ENCODE measurements at regions of chr18 and their contacts with region 1.

Region 1: GRCh38 chr18:62584241-62585120 is 61.7 kb downstream of the ZCCHC2 start:
- DNase-seq: peak; percentile 75 to 89
- ATAC-seq: peak; percentile 72 to 91 (median 87)
- H3K4me3 ChIP-seq: peak overlapping the region in 4 of 10 donors; percentile 9 to 25 (median 20)
- H3K27ac ChIP-seq: peak overlapping the region in 7 of 10 donors; percentile 19 to 53 (median 39)
- H3K4me1 ChIP-seq: peaks cover 0 to 30% (median 16%) of the 10 kb centered on the region in 9 donors
- H3K27me3 ChIP-seq: no peaks in the 10 kb centered on the region
- CTCF ChIP-seq: peak; percentile 91 to 98 (median 94)

Region 2: DNA sequence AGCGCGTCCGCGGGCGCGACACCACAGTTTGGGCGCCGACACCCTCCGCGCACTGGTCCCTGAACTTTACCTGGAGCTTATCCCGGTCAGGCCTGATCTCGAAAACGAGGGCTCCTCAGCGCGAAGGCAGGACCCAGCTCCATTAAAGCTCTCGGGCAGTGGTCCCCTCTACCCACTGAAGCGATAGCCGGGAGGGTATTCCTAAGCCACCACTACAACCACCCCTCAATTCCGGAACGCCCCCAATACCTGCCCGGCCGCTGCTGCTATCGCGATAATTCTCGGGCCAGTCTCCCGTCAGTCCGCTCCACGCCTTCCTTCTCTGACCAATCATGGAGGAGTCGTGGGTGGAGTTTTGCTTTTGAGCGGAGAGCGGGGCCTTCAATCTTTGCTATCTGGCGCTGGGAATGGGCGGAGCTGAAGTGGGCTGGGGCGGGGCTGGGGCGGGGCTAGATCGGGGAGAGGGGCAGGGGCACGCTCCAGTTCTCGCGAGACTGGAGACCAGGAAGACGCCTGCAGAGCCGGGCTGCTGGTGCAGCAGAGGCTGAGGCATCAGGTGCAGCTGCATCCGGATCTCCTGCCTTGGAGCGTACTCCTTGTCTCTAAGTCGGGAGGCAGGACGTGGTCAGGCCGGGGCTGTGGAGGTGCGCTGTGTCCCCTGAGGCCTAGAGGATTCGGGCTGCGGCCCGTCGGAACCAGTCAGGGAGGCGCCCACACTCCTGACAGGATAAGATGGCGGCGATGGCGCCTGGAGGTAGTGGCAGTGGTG is 397.5 kb before region 1 on chr18 and contains the starts of genes PIGN and RELCH:
- intact Hi-C with region 1: loop called in 5 of 10 experiments (anchors 5 to 10 kb)
- DNase-seq: peak; percentile 90 to 98
- ATAC-seq: peak; percentile 98 to 99 (median 99)
- H3K4me3 ChIP-seq: peak within 1 kb of the TSS; percentile 72 to 100 (median 94)
- H3K27ac ChIP-seq: peak within 1 kb of the TSS; percentile 56 to 91 (median 83)
- H3K4me1 ChIP-seq: peaks cover 0 to 53% (median 31%) of the 10 kb centered on the region in 9 donors
- H3K27me3 ChIP-seq: no peaks in the 10 kb centered on the region
- CTCF ChIP-seq: no peak
- total RNA-seq, gene PIGN: 14.4 to 31.6 (median 21.2) TPM
- total RNA-seq, gene RELCH: 12.1 to 21.0 (median 16.5) TPM

Region 3: DNA sequence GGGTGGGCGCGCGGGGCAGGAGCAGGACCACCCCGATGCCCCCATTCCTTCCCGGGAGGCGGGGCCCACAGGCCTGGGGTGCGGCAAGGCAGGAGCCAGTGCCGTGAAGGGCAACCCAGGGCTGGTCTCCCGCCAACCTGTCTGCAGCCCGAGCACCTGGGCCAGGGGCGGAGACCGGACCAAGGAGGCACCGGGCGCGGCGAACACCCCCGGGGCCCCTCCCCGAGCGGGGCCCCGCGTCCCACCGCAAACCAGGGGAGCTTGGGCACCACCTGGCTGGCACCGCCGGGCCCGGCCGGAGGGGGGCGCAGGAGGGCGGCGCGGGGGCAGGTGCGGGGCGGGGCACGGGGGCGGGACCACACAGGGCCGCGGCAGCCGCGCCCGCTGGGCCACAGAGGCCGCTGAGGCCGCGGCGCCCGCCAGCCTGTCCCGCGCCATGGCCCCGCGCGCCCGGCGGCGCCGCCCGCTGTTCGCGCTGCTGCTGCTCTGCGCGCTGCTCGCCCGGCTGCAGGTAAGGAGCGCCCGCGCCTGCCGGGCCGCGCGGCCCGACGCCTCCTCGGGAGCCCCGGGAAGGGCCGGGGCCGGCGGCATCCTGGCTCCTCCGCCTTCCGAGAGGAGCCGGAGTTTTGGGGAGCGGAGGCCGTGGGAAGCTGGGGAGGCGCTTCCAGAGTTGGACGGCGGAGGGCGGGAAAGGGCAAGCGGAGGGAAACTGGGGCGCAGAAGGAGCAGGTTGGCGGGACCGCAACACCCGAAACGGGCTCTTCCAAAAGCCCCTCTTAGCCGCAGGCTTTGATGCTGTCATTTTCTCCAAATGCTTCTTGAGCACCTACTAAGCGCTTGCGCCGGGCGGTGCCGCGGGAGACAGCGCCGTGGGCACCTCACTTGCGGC is 259.3 kb before region 1 on chr18 and contains the start of gene TNFRSF11A:
- intact Hi-C with region 1: loop called in 3 of 10 experiments (anchors 10 kb)
- DNase-seq: peak in 1 of 2 donors; percentile 42
- ATAC-seq: peak in 7 of 8 donors; percentile 13 to 64 (median 42)
- H3K4me3 ChIP-seq: peak within 1 kb of the TSS; percentile 7 to 60 (median 51)
- H3K27ac ChIP-seq: no peak within 1 kb of the TSS
- H3K4me1 ChIP-seq: peaks cover 6 to 54% (median 35%) of the 10 kb centered on the region in 9 donors
- H3K27me3 ChIP-seq: peaks cover 12 to 74% (median 57%) of the 10 kb centered on the region in 7 donors
- CTCF ChIP-seq: peak in 6 of 9 donors; percentile 8 to 23 (median 20)
- total RNA-seq, gene TNFRSF11A: 0.34 to 2.7 (median 1.1) TPM

Region 4: DNA sequence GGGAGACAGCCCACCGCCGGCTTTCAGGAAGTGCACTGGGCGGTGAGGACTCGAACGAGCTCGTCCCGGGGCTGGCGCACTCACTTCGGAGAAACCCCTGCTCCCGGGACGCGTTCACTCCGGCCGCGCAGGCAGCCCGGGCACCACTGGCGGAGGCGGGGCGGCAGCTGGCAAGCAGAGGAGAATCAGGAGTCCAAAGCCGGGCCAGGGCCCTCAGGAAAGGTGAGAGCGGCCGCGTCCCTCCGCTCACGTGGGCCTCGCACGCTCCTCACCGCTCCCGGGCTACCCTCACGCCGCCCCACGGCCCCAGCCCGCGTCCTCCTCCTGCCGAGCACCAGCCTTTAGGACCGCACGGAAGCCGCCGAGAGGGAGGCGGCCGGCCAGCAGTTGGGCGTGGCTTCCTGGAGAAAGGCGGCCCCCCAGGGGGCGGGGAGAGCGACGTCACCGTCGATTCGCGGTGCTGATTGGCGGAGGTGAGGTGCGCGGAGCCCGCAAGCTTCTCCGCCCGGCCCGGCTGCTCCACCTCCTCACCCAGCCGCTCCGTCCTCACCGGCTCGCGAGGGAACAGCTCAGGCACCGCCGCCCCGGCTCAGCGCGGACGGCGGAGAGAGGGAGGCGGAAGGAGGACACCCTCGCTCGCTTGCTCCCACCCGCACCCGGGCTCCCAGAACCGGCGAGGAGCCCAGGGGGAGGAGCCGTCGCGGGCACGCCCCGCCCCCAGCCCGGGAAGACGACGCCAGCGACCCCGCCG is 61.8 kb before region 1 on chr18 and contains the start of gene ZCCHC2:
- intact Hi-C with region 1: loop called in 3 of 10 experiments (anchors 5 to 10 kb)
- DNase-seq: peak; percentile 98 to 99
- ATAC-seq: peak; percentile 85 to 94 (median 93)
- H3K4me3 ChIP-seq: peak within 1 kb of the TSS; percentile 77 to 98 (median 92)
- H3K27ac ChIP-seq: peak within 1 kb of the TSS; percentile 96 to 100 (median 99)
- H3K4me1 ChIP-seq: peaks cover 0 to 37% (median 28%) of the 10 kb centered on the region in 9 donors
- H3K27me3 ChIP-seq: no peaks in the 10 kb centered on the region
- CTCF ChIP-seq: no peak
- total RNA-seq, gene ZCCHC2: 15.1 to 45.3 (median 20.1) TPM

Region 5: GRCh38 chr18:62621546-62621945 is 37.1 kb after region 1 on chr18:
- intact Hi-C with region 1: loop called in 1 of 10 experiments (anchors 5 kb)
- DNase-seq: peak; percentile 61 to 73
- ATAC-seq: peak; percentile 71 to 92 (median 84)
- H3K4me3 ChIP-seq: no peak overlapping the region
- H3K27ac ChIP-seq: peak overlapping the region in 9 of 10 donors; percentile 40 to 84 (median 73)
- H3K4me1 ChIP-seq: peaks cover 0 to 37% (median 18%) of the 10 kb centered on the region in 9 donors
- H3K27me3 ChIP-seq: peaks cover 0 to 3% (median 0%) of the 10 kb centered on the region in 7 donors
- CTCF ChIP-seq: no peak

Region 6: GRCh38 chr18:62982600-62983251 is 398.2 kb after region 1 on chr18:
- intact Hi-C with region 1: loop called (anchors 1 to 5 kb)
- DNase-seq: peak in 1 of 2 donors; percentile 61
- ATAC-seq: peak; percentile 63 to 87 (median 72)
- H3K4me3 ChIP-seq: peak overlapping the region in 8 of 10 donors; percentile 6 to 53 (median 42)
- H3K27ac ChIP-seq: no peak overlapping the region
- H3K4me1 ChIP-seq: peaks cover 0 to 20% (median 4%) of the 10 kb centered on the region in 9 donors
- H3K27me3 ChIP-seq: no peaks in the 10 kb centered on the region
- CTCF ChIP-seq: peak; percentile 43 to 88 (median 83)

Measured in heart right ventricle (tissue), 16 donors.